CD8-positive, alpha-beta T cell (primary cell): ENCODE measurements at regions of chr7 and their contacts with region 1.

Region 1: DNA sequence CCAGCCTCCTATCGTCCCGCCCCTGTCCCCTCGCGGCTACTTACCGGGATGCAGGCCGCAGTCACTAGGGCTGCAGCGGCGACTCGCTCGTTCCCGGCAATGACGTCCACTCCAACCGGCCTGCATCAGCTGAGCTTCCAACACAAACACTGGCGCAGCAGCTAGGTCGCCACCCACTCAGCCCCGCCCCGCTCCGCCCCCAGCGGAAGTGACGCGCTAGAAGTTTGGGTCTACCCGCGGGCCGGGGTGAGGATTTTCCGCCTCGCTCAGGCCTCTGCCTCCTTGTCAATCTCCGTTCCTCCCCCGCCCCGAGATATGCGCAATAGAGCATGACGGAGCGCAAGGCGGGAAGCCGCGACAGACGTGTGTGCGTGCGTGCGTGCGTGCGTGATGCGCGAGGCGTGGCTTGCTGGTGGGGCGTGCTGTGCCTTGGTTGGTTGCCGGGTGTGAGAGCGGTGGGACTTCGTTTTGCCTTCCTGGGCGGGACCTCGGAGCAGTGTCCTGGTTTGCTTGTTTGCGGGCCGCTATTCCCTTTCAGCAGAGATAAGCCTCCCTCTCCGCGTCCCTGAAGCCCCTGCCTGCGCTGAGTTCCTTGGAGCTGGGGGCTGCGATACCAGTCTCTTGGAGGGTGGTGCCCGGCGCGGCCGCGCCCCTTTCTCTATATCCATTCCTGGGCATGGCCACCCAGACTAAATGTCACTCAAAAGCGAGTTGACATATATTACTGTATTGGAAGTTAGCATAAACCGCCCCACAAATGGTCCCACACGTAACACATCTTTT is at the start of gene PNPLA8:
- DNase-seq: peak; percentile 100
- ATAC-seq: peak; percentile 90
- H3K4me3 ChIP-seq: peak within 1 kb of the TSS; percentile 80 to 93
- H3K4me3 Mint-ChIP-seq: peak within 1 kb of the TSS; percentile 97
- H3K27ac ChIP-seq: peak within 1 kb of the TSS; percentile 94 to 96
- H3K27ac Mint-ChIP-seq: peak within 1 kb of the TSS; percentile 99
- H3K4me1 ChIP-seq: peaks cover 21% of the 10 kb centered on the region
- H3K4me1 Mint-ChIP-seq: peaks cover 48% of the 10 kb centered on the region
- H3K27me3 ChIP-seq: no peaks in the 10 kb centered on the region
- H3K27me3 Mint-ChIP-seq: no peaks in the 10 kb centered on the region
- CTCF ChIP-seq: no peak
- total RNA-seq, gene PNPLA8: 98.6 to 101 TPM

Region 2: GRCh38 chr7:108569381-108570145 is 43.4 kb after region 1 on chr7 and contains the starts of genes DNAJB9 and THAP5:
- CTCF ChIA-PET with region 1: interaction called, 3 read pairs
- POLR2A ChIA-PET with region 1: interaction called, 59 read pairs
- intact Hi-C with region 1: loop called (anchors 1 kb)
- DNase-seq: peak; percentile 98 to 100 (median 99)
- ATAC-seq: peak; percentile 84
- H3K4me3 ChIP-seq: peak within 1 kb of the TSS; percentile 90 to 96
- H3K4me3 Mint-ChIP-seq: peak within 1 kb of the TSS; percentile 90
- H3K27ac ChIP-seq: peak within 1 kb of the TSS; percentile 99 to 100
- H3K27ac Mint-ChIP-seq: peak within 1 kb of the TSS; percentile 98
- H3K4me1 ChIP-seq: peaks cover 45% of the 10 kb centered on the region
- H3K4me1 Mint-ChIP-seq: peaks cover 65% of the 10 kb centered on the region
- H3K27me3 ChIP-seq: no peaks in the 10 kb centered on the region
- H3K27me3 Mint-ChIP-seq: no peaks in the 10 kb centered on the region
- CTCF ChIP-seq: no peak
- total RNA-seq, gene DNAJB9: 66.7 to 67.7 TPM
- total RNA-seq, gene THAP5: 10.7 to 13.5 TPM

Region 3: DNA sequence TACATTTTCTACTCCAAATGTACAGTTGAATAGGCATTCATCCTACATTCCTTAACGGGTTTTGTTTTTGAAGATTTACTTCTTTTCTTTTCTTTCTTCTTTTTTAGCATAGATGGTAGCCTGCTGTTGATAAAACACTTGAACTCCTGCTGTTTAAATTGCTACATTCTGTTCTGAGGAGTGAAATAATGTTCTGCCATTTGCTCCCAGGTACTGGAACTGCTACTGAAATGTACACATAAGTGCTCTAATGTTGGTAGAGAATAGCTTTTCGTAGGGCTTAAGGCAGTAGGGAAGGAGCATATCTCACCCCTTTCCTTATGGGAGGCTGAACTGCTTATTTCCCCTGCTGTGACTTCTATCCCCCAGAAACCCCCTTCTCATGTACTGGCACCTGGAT is 550.4 kb after region 1 on chr7:
- CTCF ChIA-PET with region 1: no interaction called
- POLR2A ChIA-PET with region 1: no interaction called
- intact Hi-C with region 1: no loop called
- DNase-seq: no peak
- ATAC-seq: no peak
- H3K4me3 ChIP-seq: no peak overlapping the region
- H3K4me3 Mint-ChIP-seq: no peak overlapping the region
- H3K27ac ChIP-seq: no peak overlapping the region
- H3K27ac Mint-ChIP-seq: no peak overlapping the region
- H3K4me1 ChIP-seq: no peaks in the 10 kb centered on the region
- H3K4me1 Mint-ChIP-seq: no peaks in the 10 kb centered on the region
- H3K27me3 ChIP-seq: no peaks in the 10 kb centered on the region
- H3K27me3 Mint-ChIP-seq: no peaks in the 10 kb centered on the region
- CTCF ChIP-seq: no peak